ENCODE measurements at regions of chr3 and their contacts with region 1.

Region 1: GRCh38 chr3:87771341-87772192 is 287.2 kb downstream of the CGGBP1 start:
- DNase-seq: peak; percentile 69
- H3K4me3 ChIP-seq: no peak overlapping the region
- H3K27ac ChIP-seq: no peak overlapping the region
- H3K4me1 ChIP-seq: no peaks in the 10 kb centered on the region
- H3K27me3 ChIP-seq: no peaks in the 10 kb centered on the region; the same call in 1 of the 2 replicates

Region 2: GRCh38 chr3:87006844-87007439 is 764.6 kb before region 1 on chr3:
- in situ Hi-C with region 1: no loop called
- DNase-seq: peak; percentile 66
- H3K4me3 ChIP-seq: no peak overlapping the region
- H3K27ac ChIP-seq: no peak overlapping the region
- H3K4me1 ChIP-seq: no peaks in the 10 kb centered on the region
- H3K27me3 ChIP-seq: no peaks in the 10 kb centered on the region

Region 3: GRCh38 chr3:87997298-87997697 is 225.7 kb after region 1 on chr3:
- in situ Hi-C with region 1: loop called (anchors 10 kb)
- DNase-seq: peak; percentile 33
- H3K4me3 ChIP-seq: no peak overlapping the region
- H3K27ac ChIP-seq: no peak overlapping the region
- H3K4me1 ChIP-seq: no peaks in the 10 kb centered on the region
- H3K27me3 ChIP-seq: 0 out of 2 replicates have a peak, but pooled peaks cover 3% of the 10 kb centered on the region

Measured in GM23248 (cell line).